CD8-positive, alpha-beta T cell (primary cell): ENCODE measurements at regions of chr12 and their contacts with region 1.

Region 1: DNA sequence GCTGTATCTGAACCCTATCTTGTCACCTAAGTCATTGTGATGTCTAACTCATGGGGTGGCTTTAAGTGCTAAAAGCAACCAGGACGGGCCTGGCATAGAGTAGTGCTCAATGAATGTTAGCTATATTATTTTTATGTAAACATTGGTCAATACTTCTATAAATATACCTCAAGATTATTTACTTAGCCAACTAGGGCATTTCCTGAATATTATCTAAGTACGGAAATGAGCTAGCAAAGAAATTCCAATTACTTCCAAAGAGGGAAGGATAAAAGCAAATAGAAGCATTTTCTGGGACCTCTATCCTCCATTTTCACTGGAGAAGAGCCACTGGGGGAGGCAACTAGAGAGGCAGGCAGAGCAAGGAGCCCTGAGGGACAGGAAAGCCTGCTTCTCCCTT is 20.6 kb downstream of the CCDC92 start:
- DNase-seq: no peak
- ATAC-seq: no peak
- H3K4me3 ChIP-seq: no peak overlapping the region
- H3K4me3 Mint-ChIP-seq: no peak overlapping the region
- H3K27ac ChIP-seq: no peak overlapping the region
- H3K27ac Mint-ChIP-seq: no peak overlapping the region
- H3K4me1 ChIP-seq: no peaks in the 10 kb centered on the region
- H3K4me1 Mint-ChIP-seq: peaks cover 4% of the 10 kb centered on the region
- H3K27me3 ChIP-seq: no peaks in the 10 kb centered on the region
- H3K27me3 Mint-ChIP-seq: no peaks in the 10 kb centered on the region
- CTCF ChIP-seq: no peak

Region 2: GRCh38 chr12:121992059-121992879 is 1959.8 kb before region 1 on chr12:
- CTCF ChIA-PET with region 1: no interaction called
- POLR2A ChIA-PET with region 1: no interaction called
- intact Hi-C with region 1: loop called in 1 of 2 experiments (anchors 5 kb)
- DNase-seq: peak in 8 of 9 experiments; percentile 15 to 51 (median 30)
- ATAC-seq: peak; percentile 84
- H3K4me3 ChIP-seq: no peak overlapping the region
- H3K4me3 Mint-ChIP-seq: peak overlapping the region; percentile 45
- H3K27ac ChIP-seq: no peak overlapping the region
- H3K27ac Mint-ChIP-seq: no peak overlapping the region
- H3K4me1 ChIP-seq: no peaks in the 10 kb centered on the region
- H3K4me1 Mint-ChIP-seq: peaks cover 7% of the 10 kb centered on the region
- H3K27me3 ChIP-seq: no peaks in the 10 kb centered on the region
- H3K27me3 Mint-ChIP-seq: peaks cover 2% of the 10 kb centered on the region
- CTCF ChIP-seq: no peak

Region 3: DNA sequence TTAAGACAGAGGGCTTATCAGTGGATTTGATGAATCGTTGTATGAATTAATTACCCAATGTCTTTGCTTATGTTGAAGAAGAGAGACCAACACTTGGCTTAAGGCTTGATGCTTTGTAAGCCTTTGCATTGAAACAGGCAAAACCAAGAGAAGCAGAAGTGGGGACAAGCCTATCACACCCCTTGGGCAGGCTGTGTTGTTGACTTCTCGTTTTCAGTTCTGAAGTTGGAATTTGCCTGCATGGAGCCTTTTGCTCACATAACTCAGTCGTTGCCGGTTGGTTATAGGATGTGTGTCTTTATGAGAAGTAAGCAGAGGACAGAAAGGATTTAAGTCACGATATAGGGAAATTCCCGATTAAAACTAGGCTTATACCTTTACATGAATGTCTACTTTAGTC is 74.1 kb before region 1 on chr12:
- CTCF ChIA-PET with region 1: no interaction called
- POLR2A ChIA-PET with region 1: no interaction called
- intact Hi-C with region 1: no loop called
- DNase-seq: no peak
- ATAC-seq: no peak
- H3K4me3 ChIP-seq: no peak overlapping the region
- H3K4me3 Mint-ChIP-seq: no peak overlapping the region
- H3K27ac ChIP-seq: no peak overlapping the region
- H3K27ac Mint-ChIP-seq: no peak overlapping the region
- H3K4me1 ChIP-seq: no peaks in the 10 kb centered on the region
- H3K4me1 Mint-ChIP-seq: no peaks in the 10 kb centered on the region
- H3K27me3 ChIP-seq: no peaks in the 10 kb centered on the region
- H3K27me3 Mint-ChIP-seq: peaks cover 5% of the 10 kb centered on the region
- CTCF ChIP-seq: no peak